ENCODE measurements at regions of chr2 and their contacts with region 1.

Region 1: GRCh38 chr2:172234716-172235691 is 132.3 kb upstream of the DLX2 start:
- DNase-seq: peak in 7 of 9 experiments; percentile 30 to 68 (median 38)
- ATAC-seq: peak; percentile 62
- H3K4me3 ChIP-seq: peak overlapping the region; percentile 56 to 76
- H3K4me3 Mint-ChIP-seq: peak overlapping the region; percentile 83
- H3K27ac ChIP-seq: no peak overlapping the region
- H3K27ac Mint-ChIP-seq: no peak overlapping the region
- H3K4me1 ChIP-seq: no peaks in the 10 kb centered on the region
- H3K4me1 Mint-ChIP-seq: peaks cover 17% of the 10 kb centered on the region
- H3K27me3 ChIP-seq: peaks cover 0 to 10% of the 10 kb centered on the region in 2 experiments
- H3K27me3 Mint-ChIP-seq: peaks cover 18% of the 10 kb centered on the region
- CTCF ChIP-seq: no peak

Region 2: GRCh38 chr2:172285010-172285621 is 50.1 kb after region 1 on chr2:
- CTCF ChIA-PET with region 1: interaction called, 6 read pairs
- POLR2A ChIA-PET with region 1: no interaction called
- intact Hi-C with region 1: loop called in 1 of 2 experiments (anchors 5 kb)
- DNase-seq: no peak
- ATAC-seq: no peak
- H3K4me3 ChIP-seq: no peak overlapping the region
- H3K4me3 Mint-ChIP-seq: peak overlapping the region; percentile 22
- H3K27ac ChIP-seq: no peak overlapping the region
- H3K27ac Mint-ChIP-seq: no peak overlapping the region
- H3K4me1 ChIP-seq: peaks cover 28% of the 10 kb centered on the region
- H3K4me1 Mint-ChIP-seq: peaks cover 43% of the 10 kb centered on the region
- H3K27me3 ChIP-seq: no peaks in the 10 kb centered on the region
- H3K27me3 Mint-ChIP-seq: no peaks in the 10 kb centered on the region
- CTCF ChIP-seq: no peak

Measured in CD8-positive, alpha-beta T cell (primary cell).